ENCODE measurements at regions of chr14 and their contacts with region 1.

Region 1: DNA sequence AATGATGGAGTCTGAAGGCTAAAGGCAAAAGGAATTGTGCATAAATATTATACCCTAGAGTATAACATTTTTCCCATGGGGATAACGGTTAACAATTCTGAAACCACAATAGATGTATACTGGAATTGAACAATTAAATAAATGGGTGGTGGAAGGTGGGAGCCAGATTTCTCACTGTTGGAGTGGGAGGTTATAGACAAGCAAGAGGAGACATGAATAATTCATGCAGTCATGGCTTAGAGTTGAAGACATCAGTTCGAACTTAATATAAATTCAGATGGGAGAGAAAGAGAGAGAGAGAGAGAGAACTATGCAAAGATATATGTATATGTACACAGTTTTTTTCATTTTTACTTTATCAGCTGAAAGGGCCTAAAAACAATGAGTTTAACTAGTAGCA is 523.9 kb downstream of the FOXG1 start:
- DNase-seq: no peak
- ATAC-seq: no peak
- H3K4me3 ChIP-seq: no peak overlapping the region
- H3K27ac ChIP-seq: no peak overlapping the region
- H3K4me1 ChIP-seq: no peaks in the 10 kb centered on the region
- H3K27me3 ChIP-seq: no peaks in the 10 kb centered on the region
- CTCF ChIP-seq: no peak
- EP300 ChIP-seq: no peak
- POLR2A ChIP-seq: no peak
- RAD21 ChIP-seq: no peak

Region 2: DNA sequence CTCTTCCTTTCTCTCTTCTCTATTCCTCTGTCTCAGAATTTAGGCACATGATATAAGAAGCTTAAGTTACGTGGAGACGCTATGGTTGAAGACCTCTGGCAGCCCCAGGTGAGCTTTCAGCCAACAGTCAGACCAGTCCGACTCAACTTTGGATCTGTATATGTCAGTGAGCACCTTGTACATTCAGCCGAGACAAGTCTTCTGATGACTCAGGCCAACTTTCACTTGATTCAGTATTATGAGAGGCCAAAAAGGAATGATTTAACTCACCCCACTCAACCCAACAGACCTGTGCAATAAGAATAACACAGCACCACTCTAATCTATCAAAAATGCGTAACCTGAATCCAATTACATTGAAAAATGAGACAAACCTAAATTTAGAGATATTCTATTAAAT is 571.3 kb before region 1 on chr14:
- CTCF ChIA-PET with region 1: no interaction called
- POLR2A ChIA-PET with region 1: no interaction called
- in situ Hi-C with region 1: no loop called
- intact Hi-C with region 1: loop called (anchors 10 kb)
- DNase-seq: no peak
- ATAC-seq: no peak
- H3K4me3 ChIP-seq: no peak overlapping the region
- H3K27ac ChIP-seq: no peak overlapping the region
- H3K4me1 ChIP-seq: no peaks in the 10 kb centered on the region
- H3K27me3 ChIP-seq: no peaks in the 10 kb centered on the region
- CTCF ChIP-seq: no peak
- EP300 ChIP-seq: no peak
- POLR2A ChIP-seq: no peak
- RAD21 ChIP-seq: no peak

Measured in K562 (cell line).